Activated CD4-positive, alpha-beta T cell treated with anti-CD3 and anti-CD28 coated beads for 36 hours (primary cell): ENCODE measurements at regions of chr2 and their contacts with region 1.

Region 1: GRCh38 chr2:20350753-20351554 is at the start of gene PUM2:
- DNase-seq: peak; percentile 97
- ATAC-seq: peak; percentile 85
- H3K4me3 Mint-ChIP-seq: no peak within 1 kb of the TSS
- H3K27ac Mint-ChIP-seq: peak within 1 kb of the TSS; percentile 88
- H3K4me1 Mint-ChIP-seq: peaks cover 25% of the 10 kb centered on the region
- H3K27me3 Mint-ChIP-seq: no peaks in the 10 kb centered on the region
- total RNA-seq, gene PUM2: 78.4 to 112 TPM

Region 2: DNA sequence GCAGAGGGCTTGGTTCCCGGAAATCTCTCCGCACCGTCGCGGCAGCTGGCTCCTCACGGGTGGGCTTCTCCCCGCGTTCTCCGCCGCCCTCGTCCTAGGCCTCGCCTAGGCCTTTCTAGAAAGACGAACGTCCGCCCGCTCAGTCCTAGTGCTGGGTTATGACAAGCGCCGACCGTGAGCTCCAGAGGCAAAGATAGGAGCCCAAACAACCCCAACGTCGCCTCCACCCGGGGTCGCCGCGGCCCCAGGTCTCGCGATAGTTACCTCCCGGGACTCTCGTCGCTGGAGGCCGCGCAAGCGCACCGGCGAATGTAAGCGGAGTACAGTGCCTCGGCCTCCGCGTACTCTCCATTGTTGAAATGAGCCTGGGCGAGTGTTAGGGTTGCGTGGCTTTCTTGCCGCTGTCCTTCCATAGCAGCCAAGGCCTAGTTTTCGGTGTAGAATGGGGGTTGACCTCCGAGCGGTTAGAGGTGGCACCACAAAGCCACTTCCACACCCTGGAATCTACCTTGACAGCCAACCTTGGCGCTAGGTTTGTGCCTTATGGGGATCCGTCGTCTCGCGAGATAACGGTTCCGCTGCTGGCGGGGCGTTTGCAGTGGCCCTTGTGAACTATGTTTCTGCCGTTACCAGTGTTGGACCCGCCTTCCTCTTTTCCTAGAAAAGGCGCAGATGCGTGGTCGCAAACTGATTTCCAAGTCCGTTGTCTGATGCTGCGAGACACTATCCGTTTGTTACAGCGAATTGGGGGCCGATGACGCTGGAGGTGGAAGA is 449.3 kb before region 1 on chr2 and contains the start of gene TTC32:
- CTCF ChIA-PET with region 1: no interaction called
- POLR2A ChIA-PET with region 1: no interaction called
- intact Hi-C with region 1: loop called (anchors 1 to 5 kb)
- DNase-seq: peak; percentile 95
- ATAC-seq: peak; percentile 88
- H3K4me3 Mint-ChIP-seq: peak within 1 kb of the TSS; percentile 84
- H3K27ac Mint-ChIP-seq: peak within 1 kb of the TSS; percentile 93
- H3K4me1 Mint-ChIP-seq: peaks cover 46% of the 10 kb centered on the region
- H3K27me3 Mint-ChIP-seq: peaks cover 11% of the 10 kb centered on the region
- total RNA-seq, gene TTC32: 8.8 to 15.7 TPM

Region 3: DNA sequence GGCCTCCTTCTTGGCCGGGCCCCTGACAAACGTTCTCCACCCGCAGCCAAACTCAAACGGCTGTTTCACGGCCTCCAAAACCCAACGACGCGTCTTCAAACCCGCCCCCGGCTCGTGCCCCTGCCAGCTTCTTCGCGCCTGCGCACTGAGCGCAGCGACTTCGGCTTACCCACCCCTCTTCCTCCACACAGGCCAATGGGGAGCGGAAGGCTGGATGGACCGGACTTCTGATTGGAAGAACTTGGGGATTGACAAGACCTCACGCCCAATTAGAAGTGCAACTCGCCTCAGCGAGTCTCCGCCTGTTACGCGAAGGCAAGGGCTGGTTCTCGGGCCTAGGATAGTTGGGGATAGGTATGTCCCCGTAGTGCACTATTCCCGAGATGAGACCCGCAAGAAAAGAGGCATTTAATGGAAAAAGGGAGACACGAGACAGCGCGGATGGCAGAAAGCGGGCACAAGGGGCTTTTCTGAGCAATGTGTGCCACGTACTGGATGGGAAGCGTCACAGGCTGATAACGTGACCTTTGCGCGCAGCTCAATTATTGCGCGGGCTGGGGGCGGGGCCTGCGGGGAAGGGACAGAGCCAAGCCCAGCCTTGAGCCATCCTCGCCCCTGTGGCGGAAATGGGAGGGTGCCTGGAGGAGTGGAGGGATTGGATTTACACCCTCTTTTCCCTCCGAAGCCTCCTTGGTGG is 299.3 kb before region 1 on chr2 and contains the start of gene LAPTM4A:
- CTCF ChIA-PET with region 1: no interaction called
- POLR2A ChIA-PET with region 1: no interaction called
- intact Hi-C with region 1: loop called (anchors 1 to 2 kb)
- DNase-seq: peak; percentile 99
- ATAC-seq: peak; percentile 98
- H3K4me3 Mint-ChIP-seq: no peak within 1 kb of the TSS
- H3K27ac Mint-ChIP-seq: no peak within 1 kb of the TSS
- H3K4me1 Mint-ChIP-seq: peaks cover 27% of the 10 kb centered on the region
- H3K27me3 Mint-ChIP-seq: peaks cover 11% of the 10 kb centered on the region
- total RNA-seq, gene LAPTM4A: 22.5 to 41.9 TPM

Region 4: DNA sequence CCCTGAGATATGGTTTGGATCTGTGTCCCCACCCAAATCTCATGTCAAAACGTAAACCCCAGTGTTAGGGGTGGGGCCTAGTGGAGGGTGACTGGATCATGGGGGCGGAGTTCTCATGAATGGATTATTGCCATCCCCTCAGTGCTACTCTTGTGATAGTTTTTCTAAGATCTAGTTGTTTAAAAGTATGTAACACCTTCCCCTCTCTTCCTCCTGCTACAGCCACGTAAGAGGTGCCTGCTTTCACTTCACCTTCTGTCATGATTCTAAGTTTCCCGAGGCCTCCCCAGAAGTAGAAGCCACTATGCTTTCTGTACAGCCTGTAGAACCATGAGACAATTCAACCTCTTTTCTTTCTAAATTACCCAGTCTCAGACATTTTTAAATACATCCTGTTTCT is 17.2 kb before region 1 on chr2:
- CTCF ChIA-PET with region 1: interaction called, 200 read pairs
- POLR2A ChIA-PET with region 1: no interaction called
- intact Hi-C with region 1: no loop called
- DNase-seq: no peak
- ATAC-seq: peak; percentile 75
- H3K4me3 Mint-ChIP-seq: no peak overlapping the region
- H3K27ac Mint-ChIP-seq: peak overlapping the region; percentile 66
- H3K4me1 Mint-ChIP-seq: peaks cover 87% of the 10 kb centered on the region
- H3K27me3 Mint-ChIP-seq: no peaks in the 10 kb centered on the region

Region 5: GRCh38 chr2:20391951-20392699 is 41.2 kb after region 1 on chr2:
- CTCF ChIA-PET with region 1: no interaction called
- POLR2A ChIA-PET with region 1: no interaction called
- intact Hi-C with region 1: no loop called
- DNase-seq: peak; percentile 17
- ATAC-seq: peak; percentile 44
- H3K4me3 Mint-ChIP-seq: no peak overlapping the region
- H3K27ac Mint-ChIP-seq: no peak overlapping the region
- H3K4me1 Mint-ChIP-seq: no peaks in the 10 kb centered on the region
- H3K27me3 Mint-ChIP-seq: peaks cover 2% of the 10 kb centered on the region

Region 6: DNA sequence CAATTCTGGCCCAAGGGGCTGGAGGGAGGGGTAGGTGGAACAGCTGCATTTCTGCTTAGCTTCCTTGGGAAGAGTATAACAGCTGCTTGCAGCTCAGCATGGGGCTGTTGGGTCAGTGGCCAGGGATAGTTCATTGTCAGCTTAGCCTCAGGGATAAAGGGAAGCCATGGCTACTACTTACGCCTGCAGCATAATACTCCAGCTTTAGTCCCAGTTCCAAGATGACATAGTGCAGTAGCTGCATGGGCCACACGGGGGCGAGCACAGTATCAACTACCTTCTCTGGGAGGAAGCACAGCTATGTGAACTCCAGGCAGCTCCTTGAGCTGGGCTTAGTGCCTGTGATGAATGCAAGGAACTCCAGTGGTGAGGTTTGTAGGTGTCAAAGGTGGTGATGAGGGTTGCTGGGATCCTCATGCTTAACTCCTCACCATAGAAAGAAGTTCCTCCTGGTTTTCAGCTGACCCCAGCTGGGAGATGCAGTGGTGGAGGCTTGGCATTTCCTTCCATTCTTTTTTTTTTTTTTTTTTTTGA is 60.5 kb after region 1 on chr2:
- CTCF ChIA-PET with region 1: interaction called, 4 read pairs
- POLR2A ChIA-PET with region 1: no interaction called
- intact Hi-C with region 1: loop called in 1 of 2 experiments (anchors 2 kb)
- DNase-seq: peak; percentile 87
- ATAC-seq: peak; percentile 97
- H3K4me3 Mint-ChIP-seq: no peak overlapping the region
- H3K27ac Mint-ChIP-seq: no peak overlapping the region
- H3K4me1 Mint-ChIP-seq: no peaks in the 10 kb centered on the region
- H3K27me3 Mint-ChIP-seq: peaks cover 8% of the 10 kb centered on the region

Region 7: DNA sequence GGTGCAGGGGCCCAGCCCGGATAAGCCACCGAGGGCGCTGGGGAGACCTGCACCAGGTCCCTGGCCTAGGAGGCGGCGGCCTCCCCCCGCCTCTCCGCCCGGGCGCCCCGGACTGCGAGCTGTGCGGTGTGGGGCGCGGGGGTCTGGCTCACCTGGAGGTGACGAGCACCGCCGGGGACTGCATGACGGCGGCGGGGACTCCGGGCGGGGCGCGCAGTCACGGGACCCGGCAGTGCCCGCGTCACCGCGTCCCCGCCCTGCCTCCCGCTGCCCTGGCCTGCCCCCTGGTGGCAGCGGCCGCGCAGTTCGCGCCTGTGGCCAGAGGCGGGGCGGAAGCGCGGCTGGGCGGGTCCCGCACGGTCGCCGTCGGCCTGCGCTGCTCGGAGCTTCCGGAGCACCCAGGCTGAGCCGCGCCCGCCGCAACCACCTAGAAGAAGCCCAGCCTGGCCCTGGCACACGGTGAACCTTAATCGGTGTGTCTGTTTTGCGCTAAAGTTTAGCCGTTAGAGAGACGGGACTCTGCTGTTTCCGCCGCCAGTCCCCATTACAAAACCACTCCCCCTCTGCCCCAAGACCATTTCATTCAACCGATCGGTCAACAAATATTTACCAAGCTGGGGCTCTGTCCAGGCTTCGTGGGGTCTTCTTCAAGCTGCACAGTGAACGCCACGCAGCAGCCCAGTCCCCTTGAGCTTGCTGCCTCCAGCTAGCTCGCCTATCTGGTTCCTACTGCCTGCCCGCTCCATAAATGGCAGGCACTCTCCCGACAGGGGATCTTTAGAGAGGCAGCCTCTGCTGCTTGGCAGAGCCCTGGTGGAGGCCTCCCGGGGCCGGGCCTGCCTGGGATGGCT is 300.2 kb after region 1 on chr2 and contains the start of gene HS1BP3:
- CTCF ChIA-PET with region 1: interaction called, 4 read pairs
- POLR2A ChIA-PET with region 1: no interaction called
- intact Hi-C with region 1: loop called in 1 of 2 experiments (anchors 1 kb)
- DNase-seq: peak; percentile 92
- ATAC-seq: peak; percentile 97
- H3K4me3 Mint-ChIP-seq: peak within 1 kb of the TSS; percentile 78
- H3K27ac Mint-ChIP-seq: peak within 1 kb of the TSS; percentile 86
- H3K4me1 Mint-ChIP-seq: peaks cover 22% of the 10 kb centered on the region
- H3K27me3 Mint-ChIP-seq: no peaks in the 10 kb centered on the region
- total RNA-seq, gene HS1BP3: 6.2 to 7.1 TPM

Region 8: DNA sequence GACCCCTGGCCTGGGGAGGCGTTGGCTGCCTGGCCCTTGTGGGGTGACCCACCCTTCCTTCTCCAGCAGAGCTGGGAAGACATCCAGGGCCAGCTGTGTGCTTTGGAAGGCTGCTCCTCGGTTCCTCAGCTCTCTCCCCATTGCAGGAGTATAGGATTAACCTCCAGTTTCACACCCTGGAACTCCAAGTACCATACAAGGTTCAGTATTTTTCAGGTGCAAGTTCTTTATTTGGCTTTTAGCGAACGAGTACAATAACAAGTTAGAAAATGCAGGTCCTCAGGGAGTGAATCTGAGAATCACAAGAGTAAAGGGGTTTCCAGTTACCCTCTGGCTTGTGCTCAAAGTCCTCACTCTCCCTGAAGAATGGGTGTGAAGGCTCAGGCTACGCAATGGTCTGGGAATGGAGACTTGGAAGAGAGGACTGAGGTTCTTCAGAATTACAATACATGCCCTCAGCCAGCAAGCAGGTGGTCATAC is 591.7 kb after region 1 on chr2:
- CTCF ChIA-PET with region 1: no interaction called
- POLR2A ChIA-PET with region 1: no interaction called
- intact Hi-C with region 1: no loop called
- DNase-seq: no peak
- ATAC-seq: no peak
- H3K4me3 Mint-ChIP-seq: no peak overlapping the region
- H3K27ac Mint-ChIP-seq: no peak overlapping the region
- H3K4me1 Mint-ChIP-seq: no peaks in the 10 kb centered on the region
- H3K27me3 Mint-ChIP-seq: peaks cover 11% of the 10 kb centered on the region